GM23248 (cell line): ENCODE measurements at regions of chr2 and their contacts with region 1.

Region 1: GRCh38 chr2:206260188-206261012 is 14.1 kb upstream of the ZDBF2 start:
- DNase-seq: peak; percentile 76
- H3K4me3 ChIP-seq: no peak overlapping the region
- H3K27ac ChIP-seq: no peak overlapping the region
- H3K4me1 ChIP-seq: no peaks in the 10 kb centered on the region
- H3K27me3 ChIP-seq: peaks cover 86% of the 10 kb centered on the region

Region 2: GRCh38 chr2:206159346-206160124 is 100.9 kb before region 1 on chr2 and contains the starts of genes EEF1B2 and NDUFS1:
- in situ Hi-C with region 1: loop called (anchors 10 kb)
- DNase-seq: peak; percentile 100
- H3K4me3 ChIP-seq: peak within 1 kb of the TSS; percentile 96
- H3K27ac ChIP-seq: peak within 1 kb of the TSS; percentile 92
- H3K4me1 ChIP-seq: peaks cover 21% of the 10 kb centered on the region
- H3K27me3 ChIP-seq: no peaks in the 10 kb centered on the region
- total RNA-seq, gene EEF1B2: 365 and 382 TPM in 2 replicates
- total RNA-seq, gene NDUFS1: 77.0 and 87.5 TPM in 2 replicates

Region 3: GRCh38 chr2:206521612-206522011 is 261.2 kb after region 1 on chr2:
- in situ Hi-C with region 1: no loop called
- DNase-seq: no peak
- H3K4me3 ChIP-seq: no peak overlapping the region
- H3K27ac ChIP-seq: no peak overlapping the region
- H3K4me1 ChIP-seq: no peaks in the 10 kb centered on the region
- H3K27me3 ChIP-seq: no peaks in the 10 kb centered on the region